ENCODE measurements at regions of chr11 and their contacts with region 1.

Region 1: GRCh38 chr11:62394825-62395538 is 23.9 kb upstream of the SCGB1A1 start:
- DNase-seq: peak; percentile 81
- ATAC-seq: peak; percentile 68
- H3K4me3 ChIP-seq: no peak overlapping the region
- H3K4me3 Mint-ChIP-seq: no peak overlapping the region
- H3K27ac ChIP-seq: no peak overlapping the region
- H3K27ac Mint-ChIP-seq: no peak overlapping the region
- H3K4me1 ChIP-seq: no peaks in the 10 kb centered on the region
- H3K4me1 Mint-ChIP-seq: peaks cover 2% of the 10 kb centered on the region
- H3K27me3 ChIP-seq: peaks cover 0 to 5% (median 0%) of the 10 kb centered on the region in 4 experiments
- H3K27me3 Mint-ChIP-seq: peaks cover 11% of the 10 kb centered on the region
- CTCF ChIP-seq: peak; percentile 79

Region 2: GRCh38 chr11:62383822-62384221 is 11.2 kb before region 1 on chr11:
- CTCF ChIA-PET with region 1: interaction called, 8 read pairs
- POLR2A ChIA-PET with region 1: interaction called, 7 read pairs
- intact Hi-C with region 1: loop called (anchors 1 kb)
- DNase-seq: no peak
- ATAC-seq: no peak
- H3K4me3 ChIP-seq: no peak overlapping the region
- H3K4me3 Mint-ChIP-seq: no peak overlapping the region
- H3K27ac ChIP-seq: no peak overlapping the region
- H3K27ac Mint-ChIP-seq: no peak overlapping the region
- H3K4me1 ChIP-seq: peaks cover 0 to 6% of the 10 kb centered on the region in 2 donors
- H3K4me1 Mint-ChIP-seq: peaks cover 5% of the 10 kb centered on the region
- H3K27me3 ChIP-seq: no peaks in the 10 kb centered on the region
- H3K27me3 Mint-ChIP-seq: no peaks in the 10 kb centered on the region
- CTCF ChIP-seq: no peak

Region 3: GRCh38 chr11:62421996-62422395 is 27.0 kb after region 1 on chr11:
- CTCF ChIA-PET with region 1: interaction called, 22 read pairs
- POLR2A ChIA-PET with region 1: no interaction called
- intact Hi-C with region 1: no loop called
- DNase-seq: no peak
- ATAC-seq: no peak
- H3K4me3 ChIP-seq: no peak overlapping the region
- H3K4me3 Mint-ChIP-seq: no peak overlapping the region
- H3K27ac ChIP-seq: no peak overlapping the region
- H3K27ac Mint-ChIP-seq: no peak overlapping the region
- H3K4me1 ChIP-seq: peaks cover 4 to 7% of the 10 kb centered on the region in 2 donors
- H3K4me1 Mint-ChIP-seq: peaks cover 3% of the 10 kb centered on the region
- H3K27me3 ChIP-seq: peaks cover 0 to 2% (median 0%) of the 10 kb centered on the region in 4 experiments
- H3K27me3 Mint-ChIP-seq: peaks cover 11% of the 10 kb centered on the region
- CTCF ChIP-seq: no peak